ENCODE measurements at regions of chr13 and their contacts with region 1.

Region 1: GRCh38 chr13:79393564-79394249 is 12.3 kb downstream of the RBM26 start:
- DNase-seq: peak; percentile 20
- CTCF ChIP-seq: no peak

Region 2: DNA sequence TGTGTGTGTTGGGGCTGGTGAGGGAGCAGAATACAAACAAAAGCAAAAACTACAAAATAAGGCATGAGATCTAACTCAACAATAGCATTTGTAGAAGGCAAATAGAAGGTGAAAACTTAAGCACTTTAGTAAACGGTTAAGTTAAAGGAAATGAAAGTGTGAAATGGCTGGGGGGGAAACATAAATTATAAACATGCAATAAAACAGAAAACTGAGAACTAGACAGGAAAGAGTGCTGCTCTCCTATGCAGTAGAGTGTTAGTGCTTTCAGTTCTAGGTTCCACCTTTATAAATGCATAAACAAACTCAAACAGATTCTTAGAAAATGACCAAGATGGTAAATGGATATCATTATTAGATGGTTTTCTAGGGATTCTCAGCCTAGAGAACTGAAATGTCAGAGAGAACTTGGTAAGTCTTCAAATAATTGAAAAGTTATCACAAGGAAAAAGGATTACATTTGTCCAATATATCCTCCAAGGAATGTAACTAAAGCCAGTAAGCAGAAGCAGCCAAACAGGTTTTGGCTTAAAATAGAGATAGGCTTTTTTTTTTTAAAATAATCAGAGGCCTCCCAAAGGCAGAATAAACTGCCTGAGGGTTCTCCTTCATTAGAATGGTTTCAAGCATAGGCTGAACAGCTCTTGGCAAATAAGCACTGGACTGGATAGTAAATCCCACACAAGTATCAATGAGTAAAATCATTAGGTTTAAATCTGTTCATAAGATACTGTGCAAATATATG is 11.0 kb before region 1 on chr13:
- CTCF ChIA-PET with region 1: interaction called, 20 read pairs
- POLR2A ChIA-PET with region 1: no interaction called
- DNase-seq: peak; percentile 22
- CTCF ChIP-seq: no peak

Region 3: DNA sequence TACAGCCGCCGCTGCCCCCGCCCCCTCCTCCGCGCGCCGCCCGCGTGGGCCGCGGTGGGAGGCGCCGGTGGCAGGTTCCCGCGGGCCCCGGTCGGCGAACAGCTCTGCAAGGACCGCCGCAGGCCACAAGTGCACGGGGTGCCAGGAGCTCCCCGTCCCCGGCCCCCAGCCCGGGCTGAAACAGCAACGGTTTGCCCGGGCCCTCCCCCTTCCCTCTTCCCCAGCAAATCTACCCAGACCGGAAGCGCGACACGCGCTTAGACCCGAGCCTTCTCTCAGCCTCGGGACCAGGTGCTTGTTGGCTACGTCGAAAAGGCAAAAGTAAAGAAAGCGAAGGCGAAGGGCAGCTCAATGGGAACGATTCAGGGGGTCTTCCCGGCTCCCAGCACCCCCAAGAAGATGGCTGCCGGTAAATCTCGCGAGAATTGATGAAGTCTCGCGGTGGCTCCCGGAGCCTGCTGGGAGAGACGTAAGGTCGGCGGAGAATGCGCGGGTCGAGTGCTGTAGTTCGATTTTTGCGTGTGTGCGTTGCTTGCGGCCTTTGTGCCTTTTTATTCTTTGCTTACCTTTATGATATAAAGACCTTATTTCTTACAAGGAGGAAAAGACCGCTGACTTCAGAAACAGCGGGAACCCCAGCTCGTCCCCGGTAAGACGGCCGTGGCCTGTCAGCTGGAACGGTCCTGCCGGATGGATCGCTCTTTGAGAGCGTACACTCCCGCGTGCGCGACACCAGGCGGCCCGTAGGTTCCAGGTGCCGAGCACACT is 12.3 kb after region 1 on chr13 and contains the start of gene RBM26:
- CTCF ChIA-PET with region 1: interaction called, 53 read pairs
- POLR2A ChIA-PET with region 1: interaction called, 4 read pairs
- DNase-seq: peak; percentile 94
- CTCF ChIP-seq: no peak

Region 4: GRCh38 chr13:79451500-79451962 is 57.8 kb after region 1 on chr13:
- CTCF ChIA-PET with region 1: no interaction called
- POLR2A ChIA-PET with region 1: no interaction called
- DNase-seq: peak; percentile 74
- CTCF ChIP-seq: no peak